ENCODE measurements at regions of chr2 and their contacts with region 1.

Region 1: GRCh38 chr2:233404222-233404621 is 49.9 kb downstream of the DGKD start:
- DNase-seq: peak; percentile 62 to 68
- H3K4me3 ChIP-seq: no peak overlapping the region
- H3K27ac ChIP-seq: no peak overlapping the region
- H3K4me1 ChIP-seq: no peaks in the 10 kb centered on the region
- H3K27me3 ChIP-seq: no peaks in the 10 kb centered on the region
- CTCF ChIP-seq: peak; percentile 84

Region 2: GRCh38 chr2:233280114-233280693 is 124.0 kb before region 1 on chr2:
- CTCF ChIA-PET with region 1: no interaction called
- POLR2A ChIA-PET with region 1: no interaction called
- intact Hi-C with region 1: no loop called
- DNase-seq: peak; percentile 28 to 49
- H3K4me3 ChIP-seq: no peak overlapping the region
- H3K27ac ChIP-seq: peak overlapping the region; percentile 7; the same call in 1 of the 2 replicates
- H3K4me1 ChIP-seq: peaks cover 12% of the 10 kb centered on the region; the same call in 1 of the 2 replicates
- H3K27me3 ChIP-seq: no peaks in the 10 kb centered on the region
- CTCF ChIP-seq: no peak

Region 3: GRCh38 chr2:233312874-233313273 is 91.3 kb before region 1 on chr2:
- CTCF ChIA-PET with region 1: interaction called, 11 read pairs
- POLR2A ChIA-PET with region 1: interaction called, 3 read pairs
- intact Hi-C with region 1: no loop called
- DNase-seq: no peak
- H3K4me3 ChIP-seq: no peak overlapping the region
- H3K27ac ChIP-seq: no peak overlapping the region
- H3K4me1 ChIP-seq: no peaks in the 10 kb centered on the region
- H3K27me3 ChIP-seq: no peaks in the 10 kb centered on the region
- CTCF ChIP-seq: no peak